ENCODE measurements at regions of chr10 and their contacts with region 1.

Region 1: GRCh38 chr10:119502209-119502608 is 40.3 kb downstream of the RGS10 start:
- DNase-seq: peak; percentile 64 to 96 (median 88)
- ATAC-seq: peak; percentile 84
- H3K4me3 ChIP-seq: peak overlapping the region; percentile 17
- H3K4me3 Mint-ChIP-seq: peak overlapping the region; percentile 80
- H3K27ac ChIP-seq: peak overlapping the region; percentile 78 to 95
- H3K27ac Mint-ChIP-seq: peak overlapping the region; percentile 99
- H3K4me1 ChIP-seq: peaks cover 92% of the 10 kb centered on the region
- H3K4me1 Mint-ChIP-seq: peaks cover 94% of the 10 kb centered on the region
- H3K27me3 ChIP-seq: no peaks in the 10 kb centered on the region
- H3K27me3 Mint-ChIP-seq: no peaks in the 10 kb centered on the region
- CTCF ChIP-seq: no peak

Region 2: GRCh38 chr10:119478111-119478802 is 24.0 kb before region 1 on chr10:
- CTCF ChIA-PET with region 1: no interaction called
- POLR2A ChIA-PET with region 1: interaction called, 5 read pairs
- intact Hi-C with region 1: loop called in 1 of 2 experiments (anchors 1 kb)
- DNase-seq: peak in 6 of 14 experiments; percentile 7 to 55 (median 44)
- ATAC-seq: peak; percentile 51
- H3K4me3 ChIP-seq: no peak overlapping the region
- H3K4me3 Mint-ChIP-seq: peak overlapping the region; percentile 55
- H3K27ac ChIP-seq: peak overlapping the region in 1 of 2 donors; percentile 7
- H3K27ac Mint-ChIP-seq: peak overlapping the region; percentile 35
- H3K4me1 ChIP-seq: peaks cover 31% of the 10 kb centered on the region
- H3K4me1 Mint-ChIP-seq: peaks cover 34% of the 10 kb centered on the region
- H3K27me3 ChIP-seq: no peaks in the 10 kb centered on the region
- H3K27me3 Mint-ChIP-seq: no peaks in the 10 kb centered on the region
- CTCF ChIP-seq: no peak

Region 3: GRCh38 chr10:119517235-119518141 is 15.3 kb after region 1 on chr10:
- CTCF ChIA-PET with region 1: interaction called, 3 read pairs
- POLR2A ChIA-PET with region 1: interaction called, 23 read pairs
- intact Hi-C with region 1: loop called (anchors 1 to 2 kb)
- DNase-seq: peak in 10 of 14 experiments; percentile 38 to 80 (median 51)
- ATAC-seq: peak; percentile 22
- H3K4me3 ChIP-seq: peak overlapping the region; percentile 27
- H3K4me3 Mint-ChIP-seq: peak overlapping the region; percentile 86
- H3K27ac ChIP-seq: peak overlapping the region; percentile 71 to 91
- H3K27ac Mint-ChIP-seq: peak overlapping the region; percentile 98
- H3K4me1 ChIP-seq: peaks cover 64% of the 10 kb centered on the region
- H3K4me1 Mint-ChIP-seq: peaks cover 76% of the 10 kb centered on the region
- H3K27me3 ChIP-seq: no peaks in the 10 kb centered on the region
- H3K27me3 Mint-ChIP-seq: no peaks in the 10 kb centered on the region
- CTCF ChIP-seq: no peak

Region 4: GRCh38 chr10:119650692-119651513 is 148.7 kb after region 1 on chr10 and contains the start of gene BAG3:
- CTCF ChIA-PET with region 1: no interaction called
- POLR2A ChIA-PET with region 1: no interaction called
- intact Hi-C with region 1: loop called in 1 of 2 experiments (anchors 10 kb)
- DNase-seq: peak; percentile 60 to 89 (median 76)
- ATAC-seq: peak; percentile 52
- H3K4me3 ChIP-seq: peak within 1 kb of the TSS; percentile 72
- H3K4me3 Mint-ChIP-seq: peak within 1 kb of the TSS; percentile 100
- H3K27ac ChIP-seq: peak within 1 kb of the TSS; percentile 77 to 88
- H3K27ac Mint-ChIP-seq: peak within 1 kb of the TSS; percentile 99
- H3K4me1 ChIP-seq: peaks cover 27% of the 10 kb centered on the region
- H3K4me1 Mint-ChIP-seq: peaks cover 49% of the 10 kb centered on the region
- H3K27me3 ChIP-seq: no peaks in the 10 kb centered on the region
- H3K27me3 Mint-ChIP-seq: no peaks in the 10 kb centered on the region
- CTCF ChIP-seq: no peak
- total RNA-seq, gene BAG3: 65.1 to 65.8 TPM

Region 5: DNA sequence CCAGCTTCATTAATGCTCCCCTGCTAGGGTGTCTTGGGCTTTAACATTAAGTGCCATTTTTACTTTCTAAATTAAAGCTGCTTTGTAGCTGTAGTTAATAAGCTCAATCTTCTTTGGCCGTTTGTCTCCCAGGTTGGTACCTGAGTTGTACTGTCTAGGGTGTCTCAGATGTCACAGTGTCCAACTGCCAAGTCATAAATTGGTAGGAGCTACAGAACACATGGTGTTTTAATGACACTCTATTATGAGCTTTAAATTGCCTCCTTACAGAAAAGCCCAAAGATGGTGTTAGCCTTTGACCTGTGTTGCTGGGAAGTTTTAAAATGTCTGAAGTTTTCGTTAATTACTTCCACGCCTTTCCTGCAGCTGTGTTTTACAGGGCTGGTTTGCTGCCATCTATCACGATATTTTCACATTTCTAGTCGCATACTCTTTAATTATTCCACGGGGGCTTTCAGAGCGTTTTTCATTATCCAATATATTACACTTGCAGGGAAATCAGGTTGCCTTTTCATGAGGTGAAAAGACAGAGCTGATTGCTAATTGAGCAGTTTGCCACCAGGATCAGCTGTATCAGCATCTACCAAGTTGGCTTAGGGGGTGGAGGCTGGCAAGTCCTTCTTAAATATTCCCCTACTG is 707.0 kb after region 1 on chr10:
- CTCF ChIA-PET with region 1: no interaction called
- POLR2A ChIA-PET with region 1: no interaction called
- intact Hi-C with region 1: no loop called
- DNase-seq: no peak
- ATAC-seq: no peak
- H3K4me3 ChIP-seq: no peak overlapping the region
- H3K4me3 Mint-ChIP-seq: no peak overlapping the region
- H3K27ac ChIP-seq: no peak overlapping the region
- H3K27ac Mint-ChIP-seq: no peak overlapping the region
- H3K4me1 ChIP-seq: no peaks in the 10 kb centered on the region
- H3K4me1 Mint-ChIP-seq: no peaks in the 10 kb centered on the region
- H3K27me3 ChIP-seq: peaks cover 0 to 3% of the 10 kb centered on the region in 2 experiments
- H3K27me3 Mint-ChIP-seq: peaks cover 40% of the 10 kb centered on the region
- CTCF ChIP-seq: no peak